Activated CD4-positive, alpha-beta T cell treated with anti-CD3 and anti-CD28 coated beads for 36 hours (primary cell): ENCODE measurements at regions of chr5 and their contacts with region 1.

Region 1: DNA sequence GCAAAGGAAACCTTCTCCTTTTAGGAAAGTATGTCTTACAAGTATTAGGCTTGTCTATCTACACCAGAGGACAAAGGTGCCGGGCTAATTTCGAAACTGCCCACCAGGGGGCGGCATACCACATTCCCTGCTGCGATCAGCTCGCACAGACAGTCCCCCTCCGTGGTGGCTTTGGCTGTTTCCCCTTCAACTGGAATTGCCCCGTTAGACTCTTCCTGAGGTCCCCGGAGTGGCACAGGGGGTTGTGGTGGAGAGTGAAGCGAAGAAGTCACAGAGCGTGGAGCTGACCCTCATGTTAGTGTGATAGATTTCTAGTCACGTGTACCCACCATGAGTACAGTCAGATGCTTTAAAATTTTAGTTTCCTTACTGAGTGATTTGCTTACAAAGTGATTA is 17.5 kb downstream of the PTTG1 start:
- DNase-seq: peak; percentile 93
- ATAC-seq: peak; percentile 78
- H3K4me3 Mint-ChIP-seq: peak overlapping the region; percentile 74
- H3K27ac Mint-ChIP-seq: peak overlapping the region; percentile 97
- H3K4me1 Mint-ChIP-seq: peaks cover 35% of the 10 kb centered on the region
- H3K27me3 Mint-ChIP-seq: peaks cover 4% of the 10 kb centered on the region

Region 2: DNA sequence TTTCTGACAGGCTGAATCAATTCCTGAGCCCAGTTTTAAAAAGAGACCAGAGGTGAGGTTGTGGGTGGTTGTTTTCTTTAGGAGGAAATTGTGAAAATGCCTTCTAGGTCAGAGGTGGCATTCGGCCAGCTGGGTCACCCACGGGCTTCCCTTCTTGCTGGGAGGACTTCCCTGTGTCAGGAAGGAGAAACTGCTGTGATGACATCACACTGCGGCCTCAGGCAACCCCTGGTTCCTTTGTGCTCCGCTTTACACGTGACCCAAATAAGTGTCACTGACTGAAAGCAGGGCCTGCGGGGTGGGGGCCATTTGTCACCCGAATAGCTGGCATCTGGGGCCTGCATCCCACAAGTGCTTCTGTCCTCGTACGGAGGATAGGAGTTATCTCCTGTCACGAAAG is 170.2 kb before region 1 on chr5:
- CTCF ChIA-PET with region 1: no interaction called
- POLR2A ChIA-PET with region 1: no interaction called
- intact Hi-C with region 1: no loop called
- DNase-seq: peak; percentile 13
- ATAC-seq: no peak
- H3K4me3 Mint-ChIP-seq: no peak overlapping the region
- H3K27ac Mint-ChIP-seq: no peak overlapping the region
- H3K4me1 Mint-ChIP-seq: peaks cover 4% of the 10 kb centered on the region
- H3K27me3 Mint-ChIP-seq: no peaks in the 10 kb centered on the region

Region 3: DNA sequence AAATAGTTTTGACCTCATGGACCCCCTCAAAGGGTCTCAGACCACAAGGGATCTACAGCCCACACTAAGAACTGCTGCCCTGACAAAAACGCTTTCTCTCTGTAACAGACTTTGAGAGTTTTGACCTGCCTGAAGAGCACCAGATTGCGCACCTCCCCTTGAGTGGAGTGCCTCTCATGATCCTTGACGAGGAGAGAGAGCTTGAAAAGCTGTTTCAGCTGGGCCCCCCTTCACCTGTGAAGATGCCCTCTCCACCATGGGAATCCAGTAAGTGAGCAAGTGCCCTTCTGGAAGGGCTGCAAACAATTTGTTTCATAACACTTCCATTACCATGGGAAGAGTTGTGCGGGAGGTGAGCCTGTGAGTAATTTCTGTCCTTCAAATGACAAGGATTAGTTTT is 11.6 kb before region 1 on chr5:
- CTCF ChIA-PET with region 1: interaction called, 107 read pairs
- POLR2A ChIA-PET with region 1: no interaction called
- intact Hi-C with region 1: loop called in 1 of 2 experiments (anchors 1 kb)
- DNase-seq: no peak
- ATAC-seq: no peak
- H3K4me3 Mint-ChIP-seq: no peak overlapping the region
- H3K27ac Mint-ChIP-seq: no peak overlapping the region
- H3K4me1 Mint-ChIP-seq: peaks cover 32% of the 10 kb centered on the region
- H3K27me3 Mint-ChIP-seq: no peaks in the 10 kb centered on the region

Region 4: GRCh38 chr5:160467555-160468362 is 28.6 kb after region 1 on chr5:
- CTCF ChIA-PET with region 1: interaction called, 80 read pairs
- POLR2A ChIA-PET with region 1: interaction called, 7 read pairs
- intact Hi-C with region 1: loop called (anchors 1 kb)
- DNase-seq: peak; percentile 89
- ATAC-seq: peak; percentile 85
- H3K4me3 Mint-ChIP-seq: peak overlapping the region; percentile 88
- H3K27ac Mint-ChIP-seq: peak overlapping the region; percentile 99
- H3K4me1 Mint-ChIP-seq: peaks cover 76% of the 10 kb centered on the region
- H3K27me3 Mint-ChIP-seq: no peaks in the 10 kb centered on the region

Region 5: DNA sequence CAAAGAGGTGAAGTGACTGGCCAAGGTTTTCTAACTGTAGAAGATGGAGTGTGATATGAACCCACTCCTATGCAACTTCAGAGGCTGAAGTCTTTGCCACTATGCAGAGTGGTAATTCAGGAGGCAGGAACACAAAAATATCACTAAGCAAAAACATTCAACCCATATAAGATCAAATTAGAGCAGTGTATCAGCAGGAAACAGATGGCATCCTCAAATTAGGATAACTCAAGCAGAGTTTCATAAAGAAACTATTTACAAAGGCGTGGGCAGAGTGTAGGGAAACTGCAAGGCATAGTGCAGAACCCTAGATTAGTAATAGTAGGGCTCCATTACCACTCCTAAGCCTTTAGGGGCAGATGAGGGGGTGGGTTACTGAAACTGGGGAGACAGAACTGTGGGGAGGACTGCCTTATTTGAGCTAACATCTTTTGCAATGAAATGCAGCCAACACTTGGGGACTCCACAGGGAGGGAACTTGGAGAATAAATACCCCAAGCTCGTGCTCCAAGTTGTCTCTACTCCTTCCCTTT is 54.7 kb after region 1 on chr5:
- CTCF ChIA-PET with region 1: interaction called, 15 read pairs
- POLR2A ChIA-PET with region 1: no interaction called
- intact Hi-C with region 1: no loop called
- DNase-seq: no peak
- ATAC-seq: peak; percentile 57
- H3K4me3 Mint-ChIP-seq: no peak overlapping the region
- H3K27ac Mint-ChIP-seq: no peak overlapping the region
- H3K4me1 Mint-ChIP-seq: peaks cover 31% of the 10 kb centered on the region
- H3K27me3 Mint-ChIP-seq: no peaks in the 10 kb centered on the region

Region 6: DNA sequence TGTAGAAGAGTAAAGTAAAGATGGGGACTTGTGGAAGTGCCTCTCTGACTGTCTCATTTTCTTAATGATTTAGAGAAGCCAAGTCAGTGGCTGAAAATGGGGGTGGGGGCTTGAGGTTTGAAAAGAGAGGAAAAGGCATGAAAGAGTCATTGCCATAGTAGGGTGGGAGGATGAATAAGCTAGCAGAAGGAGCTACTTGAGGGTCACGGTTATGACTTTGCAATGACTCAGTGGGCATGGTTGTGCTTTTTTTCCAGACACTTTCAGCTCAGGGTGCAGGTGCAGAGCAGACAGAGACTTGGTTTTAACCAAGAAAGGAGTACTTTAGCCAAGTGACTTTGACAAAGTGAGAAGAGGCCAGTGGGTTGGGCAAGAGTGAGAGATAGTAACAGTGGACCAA is 100.2 kb after region 1 on chr5:
- CTCF ChIA-PET with region 1: interaction called, 15 read pairs
- POLR2A ChIA-PET with region 1: no interaction called
- intact Hi-C with region 1: loop called in 1 of 2 experiments (anchors 1 kb)
- DNase-seq: peak; percentile 82
- ATAC-seq: peak; percentile 95
- H3K4me3 Mint-ChIP-seq: no peak overlapping the region
- H3K27ac Mint-ChIP-seq: no peak overlapping the region
- H3K4me1 Mint-ChIP-seq: peaks cover 25% of the 10 kb centered on the region
- H3K27me3 Mint-ChIP-seq: peaks cover 3% of the 10 kb centered on the region

Region 7: DNA sequence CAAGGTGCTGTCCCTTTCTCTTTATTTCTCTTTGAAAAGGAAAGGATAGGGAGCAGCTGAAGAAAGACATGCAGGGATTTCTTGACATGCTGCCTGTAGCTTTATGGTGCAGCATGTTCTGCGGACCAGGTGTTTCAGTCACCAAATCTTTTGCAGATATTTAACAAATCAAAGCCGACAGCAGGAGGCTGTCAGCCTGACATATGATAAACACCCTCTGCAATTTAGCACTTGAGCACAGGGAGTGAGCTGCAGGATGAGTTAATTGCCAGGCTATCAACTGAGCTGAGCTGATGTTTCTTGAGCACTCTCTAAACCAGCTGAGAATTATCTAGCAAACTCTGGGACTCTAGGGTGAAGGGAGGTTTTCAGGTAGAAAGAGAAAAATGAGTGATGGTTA is 625.6 kb after region 1 on chr5:
- CTCF ChIA-PET with region 1: no interaction called
- POLR2A ChIA-PET with region 1: no interaction called
- intact Hi-C with region 1: no loop called
- DNase-seq: no peak
- ATAC-seq: no peak
- H3K4me3 Mint-ChIP-seq: no peak overlapping the region
- H3K27ac Mint-ChIP-seq: no peak overlapping the region
- H3K4me1 Mint-ChIP-seq: no peaks in the 10 kb centered on the region
- H3K27me3 Mint-ChIP-seq: no peaks in the 10 kb centered on the region

Region 8: DNA sequence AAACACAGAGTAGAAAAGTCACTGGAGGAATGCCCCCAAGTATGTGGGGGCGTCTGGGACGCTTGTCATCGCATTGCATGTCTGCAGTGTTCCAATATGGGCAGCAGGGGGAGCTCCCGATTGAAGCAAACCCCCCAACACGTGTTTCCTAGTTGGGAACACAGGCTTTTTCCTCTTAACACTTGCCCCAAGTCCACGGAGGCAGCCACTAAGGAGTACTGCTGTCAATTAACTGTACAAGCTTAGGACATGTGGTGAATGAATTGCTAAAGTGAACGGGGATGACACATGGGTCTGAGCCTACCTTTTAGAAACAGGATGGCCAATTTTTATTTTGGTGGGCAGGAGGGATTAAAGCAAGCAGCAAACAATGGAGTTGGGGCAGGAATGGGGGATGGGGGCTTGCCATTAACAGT is 1105.2 kb after region 1 on chr5:
- CTCF ChIA-PET with region 1: interaction called, 3 read pairs
- POLR2A ChIA-PET with region 1: no interaction called
- intact Hi-C with region 1: loop called in 1 of 2 experiments (anchors 10 kb)
- DNase-seq: peak; percentile 56
- ATAC-seq: peak; percentile 42
- H3K4me3 Mint-ChIP-seq: no peak overlapping the region
- H3K27ac Mint-ChIP-seq: no peak overlapping the region
- H3K4me1 Mint-ChIP-seq: peaks cover 7% of the 10 kb centered on the region
- H3K27me3 Mint-ChIP-seq: peaks cover 58% of the 10 kb centered on the region